Tibial artery (tissue), 4 donors: ENCODE measurements at regions of chr3 and their contacts with region 1.

Region 1: GRCh38 chr3:117920253-117920898 is 1114.3 kb downstream of the IGSF11 start:
- DNase-seq: no peak
- H3K4me3 ChIP-seq: no peak overlapping the region
- H3K27ac ChIP-seq: no peak overlapping the region
- H3K4me1 ChIP-seq: no peaks in the 10 kb centered on the region
- H3K27me3 ChIP-seq: no peaks in the 10 kb centered on the region
- CTCF ChIP-seq: no peak

Region 2: DNA sequence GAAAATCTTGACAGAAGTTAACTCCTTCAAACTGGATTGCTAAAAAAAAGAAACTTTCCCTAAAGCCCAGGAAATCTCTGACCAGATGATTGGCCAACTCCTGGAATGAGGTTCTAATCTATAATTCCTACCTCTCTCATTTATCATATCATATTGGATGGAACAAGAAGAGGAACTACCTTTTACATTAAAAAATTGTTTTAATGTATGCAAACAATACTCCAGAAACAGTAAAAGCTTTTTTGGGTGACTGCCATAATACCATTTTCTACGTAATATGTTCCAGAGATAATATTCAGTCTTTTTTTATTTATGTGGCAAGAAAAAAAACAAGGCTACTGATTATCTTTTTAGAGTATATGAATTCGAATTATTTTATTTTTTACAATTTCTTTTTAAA is 1006.4 kb before region 1 on chr3:
- intact Hi-C with region 1: loop called (anchors 10 kb)
- DNase-seq: no peak
- H3K4me3 ChIP-seq: no peak overlapping the region
- H3K27ac ChIP-seq: no peak overlapping the region
- H3K4me1 ChIP-seq: no peaks in the 10 kb centered on the region
- H3K27me3 ChIP-seq: no peaks in the 10 kb centered on the region
- CTCF ChIP-seq: no peak

Region 3: GRCh38 chr3:117692416-117692995 is 227.9 kb before region 1 on chr3:
- intact Hi-C with region 1: no loop called
- DNase-seq: no peak
- H3K4me3 ChIP-seq: no peak overlapping the region
- H3K27ac ChIP-seq: no peak overlapping the region
- H3K4me1 ChIP-seq: no peaks in the 10 kb centered on the region
- H3K27me3 ChIP-seq: no peaks in the 10 kb centered on the region
- CTCF ChIP-seq: no peak